Activated CD4-positive, alpha-beta memory T cell treated with anti-CD3 and anti-CD28 coated beads for 36 hours (primary cell): ENCODE measurements at regions of chr4 and their contacts with region 1.

Region 1: DNA sequence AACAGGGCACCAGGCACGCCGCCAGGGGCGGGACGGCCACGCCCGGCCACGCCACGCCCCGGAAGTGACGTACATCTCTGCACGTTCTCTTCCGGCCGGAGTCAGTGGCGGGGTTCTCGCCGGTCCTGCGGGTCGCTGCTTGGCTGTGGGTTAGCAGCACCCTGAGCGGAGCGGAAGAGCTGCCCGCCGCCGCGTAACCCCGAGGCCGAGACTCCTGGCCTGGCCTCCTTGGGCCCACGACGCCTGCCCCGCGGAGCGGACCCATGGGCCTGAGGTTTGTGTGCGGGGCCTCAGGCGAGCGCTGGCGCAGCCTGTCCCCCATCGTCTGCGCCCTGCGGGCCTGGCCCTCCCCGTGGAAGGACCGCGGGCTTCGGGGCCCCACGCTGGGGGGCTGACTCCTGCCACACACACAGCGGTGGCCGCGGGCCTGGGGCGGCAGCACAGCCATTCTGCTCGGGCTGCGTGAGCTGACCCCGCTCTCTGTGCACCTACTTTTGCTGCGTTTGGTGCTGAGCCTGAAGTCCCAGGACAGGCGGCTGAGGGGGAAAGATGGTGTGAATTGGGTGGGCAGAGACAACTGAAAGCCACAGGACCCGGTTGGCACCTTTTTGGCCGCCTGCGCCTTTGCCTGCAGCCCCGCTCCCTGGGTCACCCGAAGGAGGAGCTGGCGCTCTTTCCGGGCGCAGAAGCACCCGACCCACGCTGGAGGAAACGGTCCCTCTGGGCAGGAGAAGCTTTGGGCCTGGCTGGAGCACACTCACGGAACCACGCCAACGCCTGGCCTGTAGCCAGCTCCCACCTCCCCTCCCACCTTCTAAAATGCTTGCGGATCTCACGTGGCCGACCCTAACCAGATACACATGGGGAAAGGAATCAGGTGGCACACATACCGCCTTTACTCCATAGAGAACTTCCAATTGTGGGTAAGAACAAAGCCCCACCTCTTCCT is 28.1 kb downstream of the NOP14 start:
- DNase-seq: peak; percentile 97
- H3K4me3 Mint-ChIP-seq: peak overlapping the region; percentile 93
- H3K27ac Mint-ChIP-seq: peak overlapping the region; percentile 95
- H3K4me1 Mint-ChIP-seq: peaks cover 53% of the 10 kb centered on the region
- H3K27me3 Mint-ChIP-seq: no peaks in the 10 kb centered on the region

Region 2: DNA sequence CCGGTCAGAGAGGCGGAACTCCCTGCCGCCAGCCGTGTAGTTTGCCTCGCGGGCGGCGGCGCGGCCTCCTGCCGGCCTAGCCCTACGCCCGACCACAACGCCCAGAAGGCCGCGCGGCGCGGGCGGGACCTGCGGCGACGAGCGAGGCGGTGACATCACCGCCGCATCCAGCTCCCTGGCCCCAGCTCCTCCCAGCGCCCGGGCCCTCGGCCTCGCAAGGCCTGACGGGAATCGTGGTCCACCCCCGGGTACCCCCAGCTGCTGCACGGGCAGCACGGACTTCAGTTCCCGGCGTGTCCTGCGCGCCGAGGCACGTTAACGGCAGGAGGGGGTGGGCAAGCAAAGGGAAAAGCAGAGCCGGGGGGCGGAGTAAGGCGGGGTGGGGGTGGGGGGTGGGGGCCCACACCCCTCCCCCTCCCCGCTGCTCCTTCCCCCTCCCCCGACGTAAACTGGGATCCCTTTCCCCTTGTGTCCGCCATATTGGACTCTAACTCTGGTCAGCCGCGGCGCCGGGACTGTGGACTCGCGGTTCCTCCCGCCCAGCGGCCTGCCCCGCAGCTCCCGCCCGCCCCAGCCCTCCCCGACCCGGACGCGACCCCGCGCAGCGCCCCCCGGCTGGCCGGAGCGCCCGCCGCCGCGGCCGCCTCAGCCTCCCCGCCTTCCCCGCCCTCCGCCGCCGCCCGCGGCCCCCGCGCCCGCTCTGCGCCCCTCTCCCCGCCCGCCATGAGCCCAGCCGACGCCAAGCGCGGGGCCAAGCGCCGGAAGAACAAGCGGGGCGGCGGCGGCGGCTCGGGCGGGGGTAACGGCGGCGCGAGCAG is 398.7 kb before region 1 on chr4 and contains the start of gene FAM193A:
- CTCF ChIA-PET with region 1: no interaction called
- POLR2A ChIA-PET with region 1: interaction called, 3 read pairs
- intact Hi-C with region 1: loop called (anchors 5 kb)
- DNase-seq: peak; percentile 100
- H3K4me3 Mint-ChIP-seq: peak within 1 kb of the TSS; percentile 87
- H3K27ac Mint-ChIP-seq: peak within 1 kb of the TSS; percentile 86
- H3K4me1 Mint-ChIP-seq: peaks cover 20% of the 10 kb centered on the region
- H3K27me3 Mint-ChIP-seq: no peaks in the 10 kb centered on the region
- total RNA-seq, gene FAM193A: 21.7 to 22.6 TPM

Region 3: GRCh38 chr4:2761035-2761923 is 173.8 kb before region 1 on chr4:
- CTCF ChIA-PET with region 1: interaction called, 14 read pairs
- POLR2A ChIA-PET with region 1: interaction called, 8 read pairs
- intact Hi-C with region 1: no loop called
- DNase-seq: peak; percentile 51
- H3K4me3 Mint-ChIP-seq: no peak overlapping the region
- H3K27ac Mint-ChIP-seq: no peak overlapping the region
- H3K4me1 Mint-ChIP-seq: peaks cover 9% of the 10 kb centered on the region
- H3K27me3 Mint-ChIP-seq: no peaks in the 10 kb centered on the region

Region 4: DNA sequence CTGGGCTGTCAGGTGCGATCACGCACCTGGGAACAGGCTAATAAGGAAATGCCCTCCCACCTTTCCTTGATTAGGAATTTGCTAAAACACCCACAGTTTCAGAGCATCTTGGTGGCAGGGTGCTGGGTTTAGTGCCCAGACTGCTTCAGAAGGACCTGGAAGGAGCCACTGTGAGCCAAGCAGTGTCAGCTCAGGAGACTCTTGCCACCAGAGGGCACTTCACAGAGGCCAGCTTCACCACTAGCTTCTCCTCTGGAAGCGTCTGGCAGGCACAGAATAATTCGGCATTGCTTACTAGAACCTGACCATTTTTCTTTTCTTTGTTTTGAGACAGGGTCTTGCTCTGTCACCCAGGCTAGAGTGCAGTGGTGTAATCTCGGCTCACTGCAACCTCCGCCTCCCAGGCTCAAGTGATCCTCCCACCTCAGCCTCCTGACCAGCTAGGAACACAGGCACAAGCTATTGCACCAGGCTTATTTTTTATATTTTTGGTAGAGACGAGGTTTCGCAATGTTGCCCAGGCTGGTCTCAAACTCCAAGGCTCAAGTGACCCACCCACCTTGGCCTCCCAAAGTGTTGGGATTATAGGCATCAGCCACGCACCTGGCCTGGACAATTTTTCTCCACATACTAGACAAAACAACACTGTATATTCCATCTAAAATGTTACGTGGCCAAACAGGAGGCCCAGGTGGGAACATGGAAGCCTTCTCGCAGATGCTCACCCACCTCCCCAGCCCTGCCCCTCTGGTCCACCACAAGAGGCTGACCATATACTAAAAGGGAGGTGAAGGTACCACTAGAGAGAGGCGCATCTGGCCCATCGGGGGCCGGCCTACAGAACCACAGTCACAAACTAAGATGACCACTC is 14.0 kb after region 1 on chr4:
- CTCF ChIA-PET with region 1: interaction called, 103 read pairs
- POLR2A ChIA-PET with region 1: interaction called, 144 read pairs
- intact Hi-C with region 1: loop called (anchors 1 kb)
- DNase-seq: peak; percentile 55
- H3K4me3 Mint-ChIP-seq: no peak overlapping the region
- H3K27ac Mint-ChIP-seq: peak overlapping the region; percentile 33
- H3K4me1 Mint-ChIP-seq: peaks cover 35% of the 10 kb centered on the region
- H3K27me3 Mint-ChIP-seq: no peaks in the 10 kb centered on the region

Region 5: GRCh38 chr4:2954358-2955185 is 19.5 kb after region 1 on chr4:
- CTCF ChIA-PET with region 1: interaction called, 103 read pairs
- POLR2A ChIA-PET with region 1: interaction called, 144 read pairs
- intact Hi-C with region 1: loop called (anchors 1 kb)
- DNase-seq: peak; percentile 92
- H3K4me3 Mint-ChIP-seq: peak overlapping the region; percentile 61
- H3K27ac Mint-ChIP-seq: peak overlapping the region; percentile 99
- H3K4me1 Mint-ChIP-seq: peaks cover 75% of the 10 kb centered on the region
- H3K27me3 Mint-ChIP-seq: no peaks in the 10 kb centered on the region

Region 6: GRCh38 chr4:2995546-2996265 is 60.6 kb after region 1 on chr4:
- CTCF ChIA-PET with region 1: no interaction called
- POLR2A ChIA-PET with region 1: no interaction called
- intact Hi-C with region 1: no loop called
- DNase-seq: no peak
- H3K4me3 Mint-ChIP-seq: no peak overlapping the region
- H3K27ac Mint-ChIP-seq: no peak overlapping the region
- H3K4me1 Mint-ChIP-seq: no peaks in the 10 kb centered on the region
- H3K27me3 Mint-ChIP-seq: peaks cover 3% of the 10 kb centered on the region